CD4-positive, alpha-beta T cell (primary cell): ENCODE measurements at regions of chr11 and their contacts with region 1.

Region 1: GRCh38 chr11:124875943-124876817 is 10.9 kb downstream of the ROBO3 start:
- DNase-seq: peak; percentile 54 to 89 (median 71)
- ATAC-seq: peak; percentile 96
- H3K4me3 ChIP-seq: peak overlapping the region; percentile 83
- H3K4me3 Mint-ChIP-seq: peak overlapping the region; percentile 94
- H3K27ac ChIP-seq: peak overlapping the region; percentile 62 to 76
- H3K27ac Mint-ChIP-seq: peak overlapping the region; percentile 87
- H3K4me1 ChIP-seq: peaks cover 23% of the 10 kb centered on the region
- H3K4me1 Mint-ChIP-seq: peaks cover 25% of the 10 kb centered on the region
- H3K27me3 ChIP-seq: peaks cover 10 to 40% of the 10 kb centered on the region in 2 experiments
- H3K27me3 Mint-ChIP-seq: peaks cover 42% of the 10 kb centered on the region
- CTCF ChIP-seq: peak; percentile 80

Region 2: GRCh38 chr11:123741159-123742028 is 1134.8 kb before region 1 on chr11 and contains the start of gene ZNF202:
- CTCF ChIA-PET with region 1: no interaction called
- POLR2A ChIA-PET with region 1: no interaction called
- intact Hi-C with region 1: loop called in 1 of 2 experiments (anchors 5 kb)
- DNase-seq: peak; percentile 81 to 95 (median 89)
- ATAC-seq: peak; percentile 93
- H3K4me3 ChIP-seq: peak within 1 kb of the TSS; percentile 98
- H3K4me3 Mint-ChIP-seq: peak within 1 kb of the TSS; percentile 97
- H3K27ac ChIP-seq: peak within 1 kb of the TSS; percentile 33 to 61
- H3K27ac Mint-ChIP-seq: peak within 1 kb of the TSS; percentile 86
- H3K4me1 ChIP-seq: peaks cover 19% of the 10 kb centered on the region
- H3K4me1 Mint-ChIP-seq: peaks cover 45% of the 10 kb centered on the region
- H3K27me3 ChIP-seq: no peaks in the 10 kb centered on the region
- H3K27me3 Mint-ChIP-seq: peaks cover 11% of the 10 kb centered on the region
- CTCF ChIP-seq: no peak
- total RNA-seq, gene ZNF202: 6.8 to 8.0 TPM

Region 3: DNA sequence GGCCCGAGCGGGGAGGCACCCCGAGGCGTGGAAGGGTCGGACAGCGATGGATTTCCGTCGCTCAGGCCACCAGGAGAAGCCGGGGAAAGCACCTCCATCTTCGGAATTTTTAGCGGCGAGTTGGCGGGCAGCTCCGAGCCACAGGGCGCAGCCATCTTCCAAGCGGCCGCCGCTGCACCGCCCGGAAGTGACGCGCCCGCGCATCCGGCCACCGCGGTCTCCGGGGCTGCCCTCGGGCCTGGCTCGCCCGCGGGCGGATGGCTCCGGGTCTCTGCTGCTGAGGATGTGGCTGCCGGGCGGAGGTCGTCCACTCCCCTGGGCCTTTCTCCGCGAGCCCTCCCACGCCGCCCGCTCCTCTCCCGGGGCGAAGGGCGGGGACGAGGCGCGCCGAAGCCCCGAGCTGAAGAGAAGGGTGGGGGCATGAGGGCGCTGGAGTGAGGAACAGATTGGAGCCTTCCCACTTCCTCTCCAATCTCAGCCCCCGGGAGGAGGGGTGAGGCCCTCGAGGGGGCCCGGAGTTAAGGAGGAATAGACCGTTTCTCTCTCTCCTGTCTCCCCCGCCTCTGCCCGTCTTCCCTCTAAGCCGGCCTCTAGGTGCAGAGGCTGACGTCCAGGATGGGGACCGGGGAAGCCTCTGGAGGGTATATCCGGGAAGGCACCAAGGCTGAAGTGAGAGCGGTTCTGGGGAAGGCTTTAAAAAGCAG is 75.8 kb before region 1 on chr11 and contains the start of gene MSANTD2:
- CTCF ChIA-PET with region 1: interaction called, 3 read pairs
- POLR2A ChIA-PET with region 1: interaction called, 6 read pairs
- intact Hi-C with region 1: loop called in 1 of 2 experiments (anchors 5 kb)
- DNase-seq: peak; percentile 53 to 89 (median 71)
- ATAC-seq: peak; percentile 79
- H3K4me3 ChIP-seq: peak within 1 kb of the TSS; percentile 85
- H3K4me3 Mint-ChIP-seq: peak within 1 kb of the TSS; percentile 98
- H3K27ac ChIP-seq: peak within 1 kb of the TSS; percentile 94 to 96
- H3K27ac Mint-ChIP-seq: peak within 1 kb of the TSS; percentile 95
- H3K4me1 ChIP-seq: peaks cover 20% of the 10 kb centered on the region
- H3K4me1 Mint-ChIP-seq: peaks cover 25% of the 10 kb centered on the region
- H3K27me3 ChIP-seq: no peaks in the 10 kb centered on the region
- H3K27me3 Mint-ChIP-seq: no peaks in the 10 kb centered on the region
- CTCF ChIP-seq: no peak
- total RNA-seq, gene MSANTD2: 4.2 to 5.1 TPM

Region 4: DNA sequence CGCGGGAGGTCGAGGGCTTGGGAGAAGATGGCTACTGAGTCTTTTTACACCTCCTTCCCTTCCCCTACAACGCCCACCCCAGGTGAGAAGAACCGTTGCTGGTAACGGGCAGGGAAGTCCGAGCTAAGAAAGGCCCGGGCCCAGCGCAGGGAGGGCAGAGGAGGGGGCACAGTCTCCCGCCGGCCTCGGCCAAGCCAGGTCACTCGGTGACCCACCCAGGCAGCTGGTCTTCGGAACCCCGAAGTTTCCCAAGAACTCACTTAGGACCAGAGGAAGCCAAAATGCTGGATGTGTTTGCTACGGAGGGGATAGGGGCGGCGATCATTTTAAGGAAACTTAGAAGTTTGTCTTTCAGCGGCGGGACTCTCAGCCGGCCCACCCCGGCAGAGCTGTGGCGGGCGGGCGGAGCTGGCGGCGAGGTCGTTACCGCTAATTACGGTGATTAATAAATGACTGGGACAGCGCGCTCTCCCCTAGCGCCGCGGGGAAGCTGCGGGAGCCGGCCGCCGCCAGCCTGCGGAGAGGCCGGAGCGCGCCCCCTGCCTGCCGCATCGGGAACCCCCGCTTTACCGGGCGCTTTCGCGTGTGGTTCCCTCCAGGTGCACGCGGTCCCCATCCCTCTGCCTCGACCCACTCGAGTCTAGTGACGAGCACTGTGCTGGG is 10.1 kb before region 1 on chr11:
- CTCF ChIA-PET with region 1: interaction called, 27 read pairs
- POLR2A ChIA-PET with region 1: interaction called, 5 read pairs
- intact Hi-C with region 1: no loop called
- DNase-seq: peak in 12 of 14 experiments; percentile 21 to 77 (median 40)
- ATAC-seq: peak; percentile 72
- H3K4me3 ChIP-seq: peak overlapping the region; percentile 34
- H3K4me3 Mint-ChIP-seq: no peak overlapping the region
- H3K27ac ChIP-seq: no peak overlapping the region
- H3K27ac Mint-ChIP-seq: no peak overlapping the region
- H3K4me1 ChIP-seq: peaks cover 53% of the 10 kb centered on the region
- H3K4me1 Mint-ChIP-seq: peaks cover 58% of the 10 kb centered on the region
- H3K27me3 ChIP-seq: peaks cover 93 to 100% of the 10 kb centered on the region in 2 experiments
- H3K27me3 Mint-ChIP-seq: peaks cover 96% of the 10 kb centered on the region
- CTCF ChIP-seq: peak; percentile 73

Region 5: GRCh38 chr11:124920870-124921609 is 44.9 kb after region 1 on chr11:
- CTCF ChIA-PET with region 1: interaction called, 5 read pairs
- POLR2A ChIA-PET with region 1: interaction called, 9 read pairs
- intact Hi-C with region 1: loop called (anchors 2 to 5 kb)
- DNase-seq: peak; percentile 59 to 90 (median 78)
- ATAC-seq: peak; percentile 87
- H3K4me3 ChIP-seq: peak overlapping the region; percentile 43
- H3K4me3 Mint-ChIP-seq: peak overlapping the region; percentile 85
- H3K27ac ChIP-seq: no peak overlapping the region
- H3K27ac Mint-ChIP-seq: peak overlapping the region; percentile 52
- H3K4me1 ChIP-seq: peaks cover 27% of the 10 kb centered on the region
- H3K4me1 Mint-ChIP-seq: peaks cover 42% of the 10 kb centered on the region
- H3K27me3 ChIP-seq: no peaks in the 10 kb centered on the region
- H3K27me3 Mint-ChIP-seq: no peaks in the 10 kb centered on the region
- CTCF ChIP-seq: no peak

Region 6: GRCh38 chr11:125082611-125083311 is 206.6 kb after region 1 on chr11:
- CTCF ChIA-PET with region 1: no interaction called
- POLR2A ChIA-PET with region 1: no interaction called
- intact Hi-C with region 1: no loop called
- DNase-seq: no peak
- ATAC-seq: no peak
- H3K4me3 ChIP-seq: no peak overlapping the region
- H3K4me3 Mint-ChIP-seq: no peak overlapping the region
- H3K27ac ChIP-seq: no peak overlapping the region
- H3K27ac Mint-ChIP-seq: no peak overlapping the region
- H3K4me1 ChIP-seq: no peaks in the 10 kb centered on the region
- H3K4me1 Mint-ChIP-seq: no peaks in the 10 kb centered on the region
- H3K27me3 ChIP-seq: no peaks in the 10 kb centered on the region
- H3K27me3 Mint-ChIP-seq: peaks cover 10% of the 10 kb centered on the region
- CTCF ChIP-seq: no peak